Panc1 (cell line): ENCODE measurements at regions of chr1 and their contacts with region 1.

Region 1: DNA sequence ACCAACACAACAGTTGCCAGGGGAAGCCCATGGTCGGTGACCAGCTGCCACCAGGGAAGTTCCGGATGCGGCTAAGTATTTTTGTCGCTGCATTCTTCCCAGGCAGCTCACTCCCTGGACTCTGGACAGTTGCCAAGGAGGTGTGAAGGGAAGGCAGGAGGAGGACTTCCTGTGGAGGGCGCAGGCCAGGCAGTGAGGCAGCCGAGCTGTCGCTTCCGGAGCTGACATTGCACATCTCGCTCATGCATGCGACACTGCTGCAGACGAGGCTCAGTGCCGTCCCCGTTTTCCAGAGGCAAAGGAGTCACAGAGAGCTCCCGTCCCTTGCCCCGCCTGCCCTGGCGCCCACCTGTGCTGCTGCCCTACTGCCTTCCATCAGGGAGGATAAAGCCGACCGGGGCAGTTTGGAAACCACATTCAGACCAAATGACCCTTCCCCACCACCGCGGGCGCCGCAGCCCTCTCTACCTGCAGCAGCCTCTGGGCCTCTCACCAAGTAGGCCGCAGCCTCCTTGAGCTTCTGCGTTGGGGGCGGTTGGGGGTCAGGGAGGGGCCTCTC is 81.4 kb downstream of the NENF start:
- DNase-seq: no peak
- ATAC-seq: peak; percentile 50; the same call in 1 of the 2 replicates
- H3K4me3 ChIP-seq: no peak overlapping the region
- H3K27ac ChIP-seq: peak overlapping the region; percentile 44; the same call in 1 of the 2 replicates
- H3K4me1 ChIP-seq: peaks cover 27% of the 10 kb centered on the region
- H3K27me3 ChIP-seq: no peaks in the 10 kb centered on the region
- CTCF ChIP-seq: no peak

Region 2: DNA sequence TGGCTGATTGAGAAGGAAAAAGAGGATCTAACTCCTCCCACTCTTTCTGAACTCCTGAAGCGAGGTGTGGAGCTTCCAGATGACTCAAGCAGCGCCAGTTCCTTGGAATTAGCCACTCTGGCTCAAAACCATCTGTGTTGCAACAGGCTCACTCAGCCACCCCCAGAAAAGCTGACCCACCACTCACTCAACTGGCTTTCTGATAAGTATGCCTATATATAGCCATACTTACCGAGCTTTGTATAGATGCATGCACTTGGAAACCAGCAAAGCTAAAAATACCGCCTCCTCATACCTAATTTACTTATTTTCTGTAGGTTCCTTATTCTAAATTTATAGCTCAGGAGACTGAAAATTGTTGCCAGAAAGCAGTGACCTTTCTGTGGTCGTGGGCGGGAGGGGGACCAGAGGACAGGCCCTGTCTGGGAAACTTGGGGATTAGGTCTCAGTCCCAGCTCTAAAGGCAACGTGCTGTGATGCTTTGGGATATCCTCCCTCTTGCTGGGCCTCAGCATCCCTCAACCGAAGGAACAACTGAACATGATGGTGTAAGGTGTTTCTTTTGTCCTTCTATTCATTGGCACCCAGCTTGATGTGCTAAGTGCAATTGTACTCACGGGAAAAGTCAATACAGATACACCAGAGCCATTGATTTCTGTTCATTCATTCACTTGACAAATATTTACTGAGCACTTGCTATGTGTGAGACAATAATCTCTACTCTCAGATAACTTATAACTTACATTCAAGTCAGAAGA is 15.7 kb before region 1 on chr1:
- CTCF ChIA-PET with region 1: no interaction called
- POLR2A ChIA-PET with region 1: no interaction called
- in situ Hi-C with region 1: no loop called
- intact Hi-C with region 1: no loop called
- DNase-seq: no peak
- ATAC-seq: no peak
- H3K4me3 ChIP-seq: no peak overlapping the region
- H3K27ac ChIP-seq: no peak overlapping the region
- H3K4me1 ChIP-seq: no peaks in the 10 kb centered on the region
- H3K27me3 ChIP-seq: no peaks in the 10 kb centered on the region
- CTCF ChIP-seq: no peak

Region 3: DNA sequence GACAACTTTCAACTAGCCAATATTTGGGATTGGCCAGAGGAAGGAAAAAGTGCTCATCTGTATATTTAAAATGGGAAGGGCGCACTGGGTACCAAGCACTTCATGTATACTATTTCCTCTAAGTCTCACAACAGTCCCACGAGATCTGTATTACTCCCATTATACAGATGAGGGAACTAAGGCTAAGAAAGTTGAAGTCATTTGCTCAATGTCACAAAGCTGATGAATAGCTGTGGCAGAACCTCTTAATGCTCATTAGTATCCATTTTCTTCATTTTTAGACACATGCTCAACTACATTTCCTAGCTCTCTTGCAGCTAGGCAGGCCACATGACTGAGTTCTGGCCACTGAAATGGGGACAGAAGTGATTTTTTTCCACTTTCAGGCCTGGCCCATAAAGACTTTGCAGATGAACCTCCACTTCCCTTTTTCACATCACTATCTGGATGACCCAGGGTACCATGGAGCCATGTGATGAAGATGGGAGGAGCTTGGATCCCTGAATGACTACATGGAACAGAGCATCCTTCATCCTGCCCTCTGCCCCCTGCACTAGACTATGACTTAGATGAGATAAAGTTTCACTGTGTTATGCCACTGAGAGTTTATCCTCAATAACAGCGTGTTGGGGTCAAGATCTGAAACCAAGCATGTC is 126.2 kb after region 1 on chr1:
- CTCF ChIA-PET with region 1: no interaction called
- POLR2A ChIA-PET with region 1: interaction called, 28 read pairs
- in situ Hi-C with region 1: no loop called
- intact Hi-C with region 1: no loop called
- DNase-seq: no peak
- ATAC-seq: no peak
- H3K4me3 ChIP-seq: no peak overlapping the region
- H3K27ac ChIP-seq: no peak overlapping the region
- H3K4me1 ChIP-seq: no peaks in the 10 kb centered on the region
- H3K27me3 ChIP-seq: 0 out of 2 replicates have a peak, but pooled peaks cover 4% of the 10 kb centered on the region
- CTCF ChIP-seq: no peak

Region 4: DNA sequence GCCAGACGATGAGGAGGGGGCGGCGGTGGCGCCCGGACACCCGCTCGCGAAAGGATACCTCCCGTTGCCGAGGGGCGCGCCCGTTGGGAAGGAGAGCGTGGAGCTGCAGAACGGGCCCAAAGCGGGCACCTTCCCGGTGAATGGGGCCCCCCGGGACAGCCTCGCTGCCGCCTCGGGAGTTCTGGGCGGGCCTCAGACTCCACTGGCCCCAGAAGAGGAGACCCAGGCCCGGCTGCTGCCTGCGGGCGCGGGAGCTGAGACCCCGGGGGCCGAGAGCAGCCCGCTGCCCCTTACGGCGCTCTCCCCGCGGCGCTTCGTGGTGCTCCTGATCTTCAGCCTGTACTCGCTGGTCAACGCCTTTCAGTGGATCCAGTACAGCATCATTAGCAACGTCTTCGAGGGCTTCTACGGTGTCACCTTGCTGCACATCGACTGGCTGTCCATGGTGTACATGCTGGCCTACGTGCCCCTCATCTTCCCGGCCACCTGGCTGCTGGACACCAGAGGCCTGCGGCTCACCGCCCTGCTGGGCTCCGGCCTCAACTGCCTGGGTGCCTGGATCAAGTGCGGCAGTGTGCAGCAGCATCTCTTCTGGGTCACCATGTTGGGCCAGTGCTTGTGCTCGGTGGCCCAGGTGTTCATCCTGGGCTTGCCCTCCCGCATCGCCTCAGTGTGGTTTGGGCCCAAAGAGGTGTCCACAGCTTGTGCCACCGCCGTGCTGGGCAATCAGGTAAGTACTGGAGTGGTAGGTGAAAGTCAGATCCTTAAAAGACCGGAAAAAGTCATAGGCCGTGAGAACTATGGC is 344.5 kb after region 1 on chr1:
- CTCF ChIA-PET with region 1: no interaction called
- POLR2A ChIA-PET with region 1: no interaction called
- in situ Hi-C with region 1: no loop called
- intact Hi-C with region 1: no loop called
- DNase-seq: no peak
- ATAC-seq: peak; percentile 63
- H3K4me3 ChIP-seq: peak overlapping the region; percentile 82
- H3K27ac ChIP-seq: peak overlapping the region; percentile 91
- H3K4me1 ChIP-seq: peaks cover 23% of the 10 kb centered on the region
- H3K27me3 ChIP-seq: no peaks in the 10 kb centered on the region
- CTCF ChIP-seq: no peak